Heart left ventricle (tissue), 16 donors: ENCODE measurements at regions of chr5 and their contacts with region 1.

Region 1: DNA sequence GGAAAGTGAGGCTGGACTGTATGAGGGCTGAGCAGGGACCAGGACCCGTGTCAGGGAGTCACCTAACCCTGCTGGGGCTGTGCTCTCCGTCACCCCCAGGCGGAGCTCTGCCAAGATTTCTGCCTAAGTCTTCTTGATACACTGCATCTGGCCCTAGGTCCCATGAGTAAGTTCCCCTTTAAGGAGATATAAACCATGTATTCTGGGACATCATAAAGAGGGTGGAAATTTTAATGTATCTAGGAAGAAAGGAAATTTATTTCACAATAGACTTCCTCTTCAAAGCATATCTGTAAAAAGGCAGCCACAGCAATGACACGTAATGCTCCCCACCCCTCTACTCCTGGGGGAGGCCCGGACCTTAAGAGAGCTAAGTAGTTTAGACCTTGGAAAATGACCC is 183.4 kb downstream of the FBXL7 start:
- DNase-seq: peak in 4 of 5 donors; percentile 35 to 69 (median 48)
- ATAC-seq: peak in 3 of 4 donors; percentile 59 to 72 (median 68)
- H3K4me3 ChIP-seq: no peak overlapping the region
- H3K27ac ChIP-seq: no peak overlapping the region
- H3K4me1 ChIP-seq: peaks cover 0 to 37% (median 21%) of the 10 kb centered on the region in 12 donors
- H3K27me3 ChIP-seq: no peaks in the 10 kb centered on the region
- CTCF ChIP-seq: peak in 10 of 12 donors; percentile 10 to 46 (median 24)
- POLR2A ChIP-seq: no peak

Region 2: GRCh38 chr5:15452781-15453180 is 230.6 kb before region 1 on chr5:
- intact Hi-C with region 1: no loop called
- DNase-seq: no peak
- ATAC-seq: no peak
- H3K4me3 ChIP-seq: no peak overlapping the region
- H3K27ac ChIP-seq: peak overlapping the region in 1 of 12 donors; percentile 54
- H3K4me1 ChIP-seq: peaks cover 0 to 8% (median 0%) of the 10 kb centered on the region in 12 donors
- H3K27me3 ChIP-seq: no peaks in the 10 kb centered on the region
- CTCF ChIP-seq: no peak
- POLR2A ChIP-seq: no peak

Region 3: GRCh38 chr5:15499528-15500324 is 183.6 kb before region 1 on chr5 and contains the start of gene FBXL7:
- intact Hi-C with region 1: loop called in 1 of 10 experiments (anchors 10 kb)
- DNase-seq: peak; percentile 88 to 92 (median 89)
- ATAC-seq: peak; percentile 90 to 93 (median 91)
- H3K4me3 ChIP-seq: peak within 1 kb of the TSS; percentile 69 to 93 (median 81)
- H3K27ac ChIP-seq: peak within 1 kb of the TSS; percentile 83 to 96 (median 90)
- H3K4me1 ChIP-seq: peaks cover 3 to 38% (median 18%) of the 10 kb centered on the region in 12 donors
- H3K27me3 ChIP-seq: peaks cover 0 to 14% (median 0%) of the 10 kb centered on the region in 9 donors
- CTCF ChIP-seq: peak in 9 of 12 donors; percentile 9 to 55 (median 37)
- POLR2A ChIP-seq: peak in 1 of 2 donors; percentile 57
- total RNA-seq, gene FBXL7: 17.6 to 27.6 (median 24.5) TPM